SK-N-SH (cell line): ENCODE measurements at regions of chr9 and their contacts with region 1.

Region 1: GRCh38 chr9:131046581-131047202 is 37.7 kb downstream of the LAMC3 start:
- DNase-seq: peak; percentile 89
- H3K4me3 ChIP-seq: peak overlapping the region in 1 of 2 experiments; percentile 55; a peak in 1 of 4 replicates
- H3K27ac ChIP-seq: no peak overlapping the region
- H3K4me1 ChIP-seq: no peaks in the 10 kb centered on the region; a peak in 1 of 4 replicates
- H3K27me3 ChIP-seq: no peaks in the 10 kb centered on the region
- CTCF ChIP-seq: peak; percentile 89
- EP300 ChIP-seq: no peak
- RAD21 ChIP-seq: peak; percentile 85

Region 2: GRCh38 chr9:130707225-130707976 is 339.3 kb before region 1 on chr9:
- CTCF ChIA-PET with region 1: interaction called, 15 read pairs
- POLR2A ChIA-PET with region 1: no interaction called
- DNase-seq: peak; percentile 34
- H3K4me3 ChIP-seq: no peak overlapping the region; a peak in 1 of 4 replicates
- H3K27ac ChIP-seq: peak overlapping the region in 1 of 2 experiments; percentile 8; a peak in 1 of 4 replicates
- H3K4me1 ChIP-seq: no peaks in the 10 kb centered on the region
- H3K27me3 ChIP-seq: no peaks in the 10 kb centered on the region
- CTCF ChIP-seq: peak; percentile 94
- EP300 ChIP-seq: no peak
- RAD21 ChIP-seq: peak; percentile 77

Region 3: DNA sequence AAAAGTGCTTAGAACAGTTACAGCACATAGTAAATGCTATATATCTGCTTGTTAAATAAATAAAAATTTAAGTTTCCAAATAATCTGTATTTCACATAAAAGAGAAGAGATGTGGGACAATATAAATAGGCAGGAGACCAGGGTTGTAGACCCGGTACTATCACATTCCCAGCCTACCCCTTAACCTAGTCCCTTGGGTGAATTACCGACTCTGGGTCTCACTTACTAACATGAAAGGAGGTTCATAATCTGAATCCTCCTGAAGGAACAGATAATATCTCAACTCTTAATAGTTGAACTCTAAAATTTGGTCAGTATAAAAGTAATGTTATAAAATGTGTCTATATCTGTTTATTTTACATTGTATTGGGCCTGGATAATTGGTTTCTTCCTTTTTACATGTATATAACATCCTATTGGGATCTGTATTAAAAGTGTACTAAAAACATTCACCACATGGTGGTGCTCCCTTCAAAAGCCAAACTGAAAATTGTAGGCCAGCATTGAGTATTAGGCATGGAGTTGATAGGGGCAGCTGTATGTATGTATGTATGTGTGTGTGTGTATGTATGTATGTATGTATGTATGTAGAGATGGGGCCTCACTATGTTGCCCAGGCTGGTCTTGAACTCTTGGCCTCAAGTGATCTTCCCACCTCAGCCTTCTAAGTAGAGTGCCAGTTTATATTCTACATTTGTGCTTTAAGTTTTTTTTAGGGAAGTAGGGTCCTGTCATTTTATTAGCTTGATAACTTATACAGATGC is 275.8 kb before region 1 on chr9:
- CTCF ChIA-PET with region 1: interaction called, 15 read pairs
- POLR2A ChIA-PET with region 1: no interaction called
- DNase-seq: peak; percentile 71
- H3K4me3 ChIP-seq: no peak overlapping the region; a peak in 1 of 4 replicates
- H3K27ac ChIP-seq: no peak overlapping the region
- H3K4me1 ChIP-seq: peaks cover 6 to 21% of the 10 kb centered on the region in 2 experiments; a peak in 3 of 4 replicates
- H3K27me3 ChIP-seq: no peaks in the 10 kb centered on the region
- CTCF ChIP-seq: peak; percentile 80
- EP300 ChIP-seq: no peak
- RAD21 ChIP-seq: peak; percentile 87

Region 4: DNA sequence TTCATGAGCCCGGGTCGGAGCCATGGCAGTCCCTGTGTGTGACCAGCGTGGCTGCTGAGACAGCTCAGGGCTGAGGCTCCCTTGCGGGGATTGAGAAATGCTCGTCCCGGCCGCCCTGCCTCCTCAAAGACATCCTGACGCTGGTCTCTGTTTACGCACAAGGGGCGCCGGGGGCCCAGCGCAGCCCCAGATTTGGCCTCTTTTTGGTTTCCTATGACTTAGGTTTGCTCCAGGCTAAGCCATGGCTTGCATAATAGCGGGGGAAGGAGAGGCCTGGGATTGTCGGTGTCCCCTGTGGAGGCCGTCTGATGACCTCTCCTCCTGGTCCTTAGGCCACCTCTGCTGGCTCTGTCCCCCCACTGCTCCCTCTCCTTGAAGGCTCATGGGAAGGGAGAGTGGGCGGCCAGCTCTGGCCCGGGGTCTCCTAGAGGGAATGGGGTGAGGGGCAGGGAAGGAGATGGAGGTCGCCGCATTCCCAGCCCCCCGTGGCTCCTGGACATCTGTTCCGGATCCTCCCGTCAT is 34.2 kb before region 1 on chr9:
- CTCF ChIA-PET with region 1: interaction called, 47 read pairs
- POLR2A ChIA-PET with region 1: no interaction called
- DNase-seq: peak; percentile 23
- H3K4me3 ChIP-seq: no peak overlapping the region
- H3K27ac ChIP-seq: no peak overlapping the region
- H3K4me1 ChIP-seq: no peaks in the 10 kb centered on the region; a peak in 1 of 4 replicates
- H3K27me3 ChIP-seq: peaks cover 25% of the 10 kb centered on the region
- CTCF ChIP-seq: no peak
- EP300 ChIP-seq: no peak
- RAD21 ChIP-seq: no peak

Region 5: GRCh38 chr9:131018621-131019020 is 28.1 kb before region 1 on chr9:
- CTCF ChIA-PET with region 1: interaction called, 47 read pairs
- POLR2A ChIA-PET with region 1: no interaction called
- DNase-seq: no peak
- H3K4me3 ChIP-seq: no peak overlapping the region
- H3K27ac ChIP-seq: no peak overlapping the region
- H3K4me1 ChIP-seq: no peaks in the 10 kb centered on the region
- H3K27me3 ChIP-seq: peaks cover 14% of the 10 kb centered on the region; the same call in 1 of the 2 replicates
- CTCF ChIP-seq: peak; percentile 25; the same call in 1 of the 2 replicates
- EP300 ChIP-seq: no peak
- RAD21 ChIP-seq: no peak

Region 6: DNA sequence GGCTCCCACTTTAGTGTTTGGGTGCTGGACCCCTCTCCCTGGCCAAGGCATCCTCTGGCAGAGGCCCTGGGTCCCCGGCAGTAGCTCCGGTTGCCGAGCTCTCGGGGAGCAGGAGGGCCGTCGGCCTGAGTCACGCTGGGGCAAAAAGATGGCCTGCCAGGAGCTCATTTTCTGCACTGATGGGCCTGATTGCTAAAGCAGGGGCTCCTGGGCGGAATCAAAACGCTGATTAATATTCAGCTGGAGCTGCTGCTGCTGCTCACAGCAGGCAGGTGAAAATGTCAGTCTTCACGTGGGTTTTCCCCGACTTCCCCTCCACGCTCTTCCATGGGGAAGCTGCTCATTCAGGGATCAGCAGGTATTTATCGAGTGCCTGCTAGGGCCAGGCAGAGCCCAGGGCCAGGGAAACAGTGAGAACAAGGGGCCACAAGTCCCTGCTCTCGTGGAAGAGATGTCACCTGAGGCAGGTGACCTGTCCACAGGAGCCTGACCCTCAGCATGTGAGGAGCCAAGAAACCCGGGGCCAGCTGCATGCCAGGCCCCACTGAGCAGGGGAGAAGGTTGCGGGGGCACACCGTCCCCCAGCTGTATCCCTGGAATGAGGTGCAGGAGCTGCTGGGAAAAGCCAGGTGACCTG is 15.6 kb before region 1 on chr9:
- CTCF ChIA-PET with region 1: interaction called, 39 read pairs
- POLR2A ChIA-PET with region 1: interaction called, 4 read pairs
- DNase-seq: no peak
- H3K4me3 ChIP-seq: no peak overlapping the region
- H3K27ac ChIP-seq: no peak overlapping the region
- H3K4me1 ChIP-seq: peaks cover 0 to under 1% of the 10 kb centered on the region in 2 experiments; a peak in 1 of 4 replicates
- H3K27me3 ChIP-seq: 0 out of 2 replicates have a peak, but pooled peaks cover 5% of the 10 kb centered on the region
- CTCF ChIP-seq: no peak
- EP300 ChIP-seq: no peak
- RAD21 ChIP-seq: no peak

Region 7: DNA sequence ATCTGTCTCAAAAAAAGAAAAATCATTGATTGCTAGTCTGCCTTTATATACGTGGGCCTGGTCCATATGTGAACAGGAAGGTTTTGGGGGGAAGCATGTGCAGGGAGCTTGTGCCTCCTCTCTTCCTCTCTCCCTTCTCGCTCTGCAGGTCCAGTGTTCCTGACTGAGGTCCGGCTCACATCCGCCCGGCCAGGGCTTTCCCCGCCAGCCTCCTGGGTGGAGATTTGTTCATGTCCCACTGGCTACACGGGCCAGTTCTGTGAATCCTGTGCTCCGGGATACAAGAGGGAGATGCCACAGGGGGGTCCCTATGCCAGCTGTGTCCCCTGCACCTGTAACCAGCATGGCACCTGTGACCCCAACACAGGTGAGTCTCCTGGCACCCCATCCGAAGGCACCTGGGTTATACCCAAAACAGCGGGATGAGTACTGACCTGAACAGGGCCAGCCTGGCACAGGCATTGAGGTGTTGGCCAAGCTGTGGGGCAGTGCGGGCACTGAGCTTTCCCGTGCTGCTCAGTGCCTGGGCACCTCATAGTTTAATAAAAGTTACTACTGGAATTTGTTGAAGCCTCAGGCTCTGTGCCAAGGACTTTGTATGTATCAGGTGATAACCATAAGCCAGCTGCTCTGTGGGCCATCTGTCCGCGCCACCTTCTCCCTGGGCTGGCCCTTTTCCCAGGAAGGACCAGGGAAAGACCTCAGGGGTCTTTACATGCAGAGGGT is 10.3 kb after region 1 on chr9:
- CTCF ChIA-PET with region 1: interaction called, 52 read pairs
- POLR2A ChIA-PET with region 1: no interaction called
- DNase-seq: no peak
- H3K4me3 ChIP-seq: no peak overlapping the region
- H3K27ac ChIP-seq: no peak overlapping the region
- H3K4me1 ChIP-seq: peaks cover 0 to 3% of the 10 kb centered on the region in 2 experiments; a peak in 1 of 4 replicates
- H3K27me3 ChIP-seq: no peaks in the 10 kb centered on the region; the same call in 1 of the 2 replicates
- CTCF ChIP-seq: no peak
- EP300 ChIP-seq: no peak
- RAD21 ChIP-seq: no peak